Activated CD4-positive, alpha-beta T cell treated with anti-CD3 and anti-CD28 coated beads, Interleukin-2, amount 10 ng/mL, durations not matched to agents 7 days and 5 days (primary cell): ENCODE measurements at regions of chr11 and their contacts with region 1.

Region 1: GRCh38 chr11:3049430-3050243 is 7.6 kb downstream of the CARS1 start:
- DNase-seq: peak; percentile 55
- H3K4me3 Mint-ChIP-seq: peak overlapping the region; percentile 46
- H3K27ac Mint-ChIP-seq: peak overlapping the region; percentile 89
- H3K4me1 Mint-ChIP-seq: peaks cover 46% of the 10 kb centered on the region
- H3K27me3 Mint-ChIP-seq: no peaks in the 10 kb centered on the region

Region 2: GRCh38 chr11:3037040-3037944 is 12.3 kb before region 1 on chr11:
- CTCF ChIA-PET with region 1: interaction called, 20 read pairs
- POLR2A ChIA-PET with region 1: no interaction called
- DNase-seq: peak; percentile 55
- H3K4me3 Mint-ChIP-seq: no peak overlapping the region
- H3K27ac Mint-ChIP-seq: peak overlapping the region; percentile 43
- H3K4me1 Mint-ChIP-seq: peaks cover 37% of the 10 kb centered on the region
- H3K27me3 Mint-ChIP-seq: no peaks in the 10 kb centered on the region